ENCODE measurements at regions of chr5 and their contacts with region 1.

Region 1: DNA sequence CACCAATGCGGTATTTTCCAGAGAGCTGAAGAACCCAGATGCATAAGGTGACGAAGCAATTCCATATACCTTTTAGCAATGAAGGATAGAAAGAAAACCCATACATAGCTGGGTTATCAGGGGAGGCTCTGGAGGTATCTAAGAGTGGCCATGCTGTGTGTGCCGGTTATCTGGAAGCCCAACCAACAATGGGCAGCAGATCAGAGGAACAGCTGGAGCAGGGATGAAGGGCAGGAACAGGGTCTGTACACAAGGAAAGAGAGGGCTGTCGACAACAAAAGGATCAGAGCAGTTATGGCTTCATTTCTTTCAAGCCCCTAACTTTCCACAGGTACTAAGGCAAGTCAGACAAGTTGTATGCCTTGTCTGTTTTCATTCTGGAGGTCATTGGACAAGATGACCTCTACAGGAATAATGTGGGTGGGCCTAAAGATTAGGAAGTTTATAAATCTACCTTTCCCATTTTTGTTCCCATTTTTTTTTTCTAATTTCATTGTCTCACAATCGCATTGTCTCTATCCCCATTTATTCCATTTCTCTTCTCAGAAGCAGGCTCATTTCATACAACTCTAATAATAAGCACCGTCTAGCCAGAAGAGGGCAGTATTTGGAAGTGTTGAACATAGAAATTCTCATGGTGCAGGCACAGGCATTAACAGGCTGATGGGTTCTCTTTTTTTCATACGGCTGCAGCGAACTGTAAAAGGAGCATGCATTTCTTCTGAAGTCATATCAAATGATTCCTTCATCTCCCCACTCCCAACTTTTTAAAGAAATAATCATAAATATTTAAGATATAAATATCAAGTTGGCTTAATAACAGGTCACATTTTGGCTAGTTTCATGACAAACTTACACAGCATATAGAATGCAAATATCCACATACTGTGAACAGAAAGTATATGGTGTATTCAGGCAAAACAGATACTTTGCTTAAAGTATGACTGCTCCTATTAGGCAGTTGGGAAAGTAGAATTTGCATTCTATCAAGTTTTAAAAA is 63.5 kb downstream of the ZNF474 start:
- DNase-seq: peak in 3 of 5 donors; percentile 22 to 52 (median 33)
- H3K4me3 ChIP-seq: no peak overlapping the region
- H3K27ac ChIP-seq: no peak overlapping the region
- H3K4me1 ChIP-seq: peaks cover 2% of the 10 kb centered on the region
- H3K27me3 ChIP-seq: no peaks in the 10 kb centered on the region
- CTCF ChIP-seq: peak; percentile 40 to 75 (median 68)
- EP300 ChIP-seq: no peak
- POLR2A ChIP-seq: no peak

Region 2: DNA sequence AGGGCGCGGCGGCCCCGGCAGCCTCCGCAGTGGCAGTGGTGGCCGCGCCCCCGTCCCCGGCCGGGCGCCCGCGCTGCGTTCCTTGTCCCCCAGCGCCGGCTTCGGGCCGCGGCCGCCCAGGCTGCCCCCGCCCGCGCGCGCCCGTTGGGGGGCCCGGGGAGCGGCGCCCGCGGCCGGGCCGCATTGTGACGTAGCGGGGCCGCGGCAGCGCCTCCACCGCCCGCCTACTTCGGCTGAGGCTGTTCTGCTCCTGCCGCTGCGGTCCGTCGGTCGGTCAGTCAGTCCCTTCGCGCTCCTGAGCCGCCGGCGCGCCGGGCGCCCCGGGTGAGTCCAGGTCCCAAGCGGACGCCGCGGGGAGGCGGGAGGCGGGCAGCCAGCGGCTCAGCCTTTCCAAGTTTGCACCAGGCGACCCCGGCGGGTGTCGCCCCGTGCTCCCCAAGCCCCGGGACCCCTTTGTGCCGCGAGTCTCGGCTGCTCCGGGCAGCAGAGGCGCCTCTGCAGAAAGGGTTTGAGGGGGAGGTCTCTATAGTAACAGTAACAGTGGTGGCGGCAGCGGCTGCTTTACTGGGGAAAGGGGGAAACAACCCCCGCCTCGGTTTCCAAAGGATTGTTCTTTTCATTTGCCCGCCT is 119.3 kb after region 1 on chr5 and contains the start of gene SNCAIP:
- intact Hi-C with region 1: loop called in 1 of 4 experiments (anchors 5 kb)
- DNase-seq: peak; percentile 63 to 80 (median 75)
- H3K4me3 ChIP-seq: peak within 1 kb of the TSS; percentile 86
- H3K27ac ChIP-seq: peak within 1 kb of the TSS; percentile 78 to 89
- H3K4me1 ChIP-seq: peaks cover 7% of the 10 kb centered on the region
- H3K27me3 ChIP-seq: no peaks in the 10 kb centered on the region
- CTCF ChIP-seq: no peak
- EP300 ChIP-seq: no peak
- POLR2A ChIP-seq: peak; percentile 40
- total RNA-seq, gene SNCAIP: 20.4 to 92.5 (median 51.6) TPM

Region 3: GRCh38 chr5:122415030-122415800 is 222.4 kb after region 1 on chr5:
- intact Hi-C with region 1: loop called (anchors 5 to 10 kb)
- DNase-seq: peak; percentile 60 to 77 (median 67)
- H3K4me3 ChIP-seq: no peak overlapping the region
- H3K27ac ChIP-seq: peak overlapping the region in 1 of 2 donors; percentile 41
- H3K4me1 ChIP-seq: peaks cover 10% of the 10 kb centered on the region
- H3K27me3 ChIP-seq: no peaks in the 10 kb centered on the region
- CTCF ChIP-seq: peak; percentile 67 to 71 (median 69)
- EP300 ChIP-seq: no peak
- POLR2A ChIP-seq: no peak

Region 4: GRCh38 chr5:122500245-122501075 is 307.7 kb after region 1 on chr5:
- intact Hi-C with region 1: loop called in 3 of 4 experiments (anchors 5 to 10 kb)
- DNase-seq: peak in 4 of 5 donors; percentile 47 to 73 (median 59)
- H3K4me3 ChIP-seq: no peak overlapping the region
- H3K27ac ChIP-seq: peak overlapping the region; percentile 20 to 74
- H3K4me1 ChIP-seq: peaks cover 10% of the 10 kb centered on the region
- H3K27me3 ChIP-seq: no peaks in the 10 kb centered on the region
- CTCF ChIP-seq: peak; percentile 38 to 53 (median 39)
- EP300 ChIP-seq: no peak
- POLR2A ChIP-seq: no peak

Region 5: DNA sequence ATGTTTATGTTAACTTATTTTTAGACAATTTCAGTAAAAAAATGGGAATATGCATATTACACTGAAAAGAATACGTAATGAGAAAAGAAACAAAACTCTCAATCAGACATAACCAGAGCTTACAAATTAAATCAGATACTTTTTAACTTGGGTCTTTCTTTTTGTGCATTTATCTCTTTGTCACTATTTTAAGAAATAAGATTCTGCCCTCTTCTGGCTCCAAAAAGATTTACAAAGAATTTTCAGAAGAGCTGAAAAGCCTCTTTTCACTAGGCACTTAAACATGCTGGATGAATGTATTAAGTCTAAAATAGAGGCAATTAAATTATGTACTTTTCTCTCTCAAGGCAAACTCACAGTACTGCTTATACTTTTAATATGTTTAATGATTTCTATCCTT is 1174.9 kb after region 1 on chr5:
- intact Hi-C with region 1: loop called in 1 of 4 experiments (anchors 10 kb)
- DNase-seq: no peak
- H3K4me3 ChIP-seq: no peak overlapping the region
- H3K27ac ChIP-seq: no peak overlapping the region
- H3K4me1 ChIP-seq: peaks cover 1% of the 10 kb centered on the region
- H3K27me3 ChIP-seq: no peaks in the 10 kb centered on the region
- CTCF ChIP-seq: peak in 1 of 3 donors; percentile 31
- EP300 ChIP-seq: no peak
- POLR2A ChIP-seq: no peak

Measured in ovary (tissue), 10 donors.